ENCODE measurements at regions of chr7 and their contacts with region 1.

Region 1: GRCh38 chr7:42940985-42941847 is 9.0 kb downstream of the MRPL32 start:
- DNase-seq: peak; percentile 73 to 83
- H3K4me3 ChIP-seq: no peak overlapping the region
- H3K27ac ChIP-seq: no peak overlapping the region
- H3K4me1 ChIP-seq: peaks cover 0 to 12% (median 2%) of the 10 kb centered on the region in 4 donors
- H3K27me3 ChIP-seq: no peaks in the 10 kb centered on the region
- CTCF ChIP-seq: peak; percentile 77 to 80

Region 2: DNA sequence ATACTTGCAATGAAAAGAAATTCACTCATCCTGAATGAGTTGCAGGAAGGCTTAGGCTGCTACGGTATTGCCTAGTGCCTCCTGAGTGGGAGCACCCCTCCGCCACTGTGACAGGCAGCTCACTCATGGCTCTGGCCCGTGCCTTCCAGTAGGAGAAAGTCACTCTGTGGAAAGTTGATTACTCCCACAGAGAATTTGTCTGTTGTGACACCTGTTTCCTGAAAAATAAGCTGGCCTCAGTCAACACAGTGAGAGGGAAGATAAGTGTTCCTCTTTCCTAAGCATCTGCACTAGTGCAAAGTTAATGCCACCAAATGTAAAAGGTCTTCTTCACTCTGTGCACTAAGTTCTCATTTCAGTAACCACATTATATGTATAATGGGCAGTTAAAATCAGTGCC is 1079.6 kb before region 1 on chr7:
- intact Hi-C with region 1: no loop called
- DNase-seq: no peak
- H3K4me3 ChIP-seq: no peak overlapping the region
- H3K27ac ChIP-seq: no peak overlapping the region
- H3K4me1 ChIP-seq: peaks cover 0 to 9% (median 0%) of the 10 kb centered on the region in 4 donors
- H3K27me3 ChIP-seq: no peaks in the 10 kb centered on the region
- CTCF ChIP-seq: no peak

Region 3: GRCh38 chr7:43148161-43148731 is 207.0 kb after region 1 on chr7:
- intact Hi-C with region 1: no loop called
- DNase-seq: no peak
- H3K4me3 ChIP-seq: no peak overlapping the region
- H3K27ac ChIP-seq: no peak overlapping the region
- H3K4me1 ChIP-seq: no peaks in the 10 kb centered on the region
- H3K27me3 ChIP-seq: peaks cover 0 to 6% of the 10 kb centered on the region in 2 donors
- CTCF ChIP-seq: no peak

Region 4: DNA sequence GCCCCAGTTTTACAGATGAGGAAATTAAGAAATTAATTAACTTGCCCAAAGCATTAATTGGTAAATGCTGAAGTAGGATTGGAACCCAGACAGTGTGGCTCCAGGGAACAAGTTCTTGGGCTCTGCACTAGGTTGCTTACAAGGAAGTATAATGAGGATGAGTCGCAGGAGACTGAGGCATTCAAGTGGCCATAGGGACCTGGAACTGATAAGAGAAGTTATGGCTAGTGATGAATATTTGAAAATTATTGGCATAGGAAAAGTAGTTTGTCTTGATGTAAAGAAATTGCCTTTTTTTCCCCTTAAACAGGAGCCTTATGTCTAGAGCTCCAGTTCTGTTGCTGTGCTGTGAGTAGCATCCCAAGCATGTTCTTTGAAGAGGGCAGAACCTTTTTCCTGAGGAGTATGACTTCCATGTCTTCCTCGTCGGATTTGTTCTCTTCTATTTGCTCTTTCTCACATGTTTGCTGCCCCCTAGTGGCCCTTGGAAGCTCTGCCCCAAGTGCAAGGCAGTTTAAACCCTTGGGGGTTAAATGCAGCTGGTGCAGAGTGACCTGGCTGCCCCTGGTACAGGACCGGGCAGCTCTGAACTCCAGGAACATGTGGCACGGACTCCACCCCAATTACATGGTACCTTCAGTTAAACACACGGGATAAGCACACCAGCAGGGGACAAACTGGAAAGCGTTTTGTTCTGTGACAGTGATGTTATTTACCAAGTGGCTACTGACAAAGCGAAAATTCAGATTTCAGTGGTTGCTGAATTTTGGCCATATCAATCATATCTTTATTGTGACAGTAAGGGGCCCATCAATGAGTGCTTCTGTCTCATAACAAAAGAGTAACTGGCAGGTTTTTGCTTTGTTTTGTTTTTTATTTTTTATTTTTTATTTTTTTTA is 320.0 kb after region 1 on chr7:
- intact Hi-C with region 1: loop called (anchors 10 kb)
- DNase-seq: peak in 1 of 2 donors; percentile 71
- H3K4me3 ChIP-seq: no peak overlapping the region
- H3K27ac ChIP-seq: no peak overlapping the region
- H3K4me1 ChIP-seq: no peaks in the 10 kb centered on the region
- H3K27me3 ChIP-seq: peaks cover 0 to 3% of the 10 kb centered on the region in 2 donors
- CTCF ChIP-seq: peak; percentile 74 to 87

Measured in tibial artery (tissue), 4 donors.